Dorsolateral prefrontal cortex (tissue), 120 donors: ENCODE measurements at regions of chr19 and their contacts with region 1.

Region 1: DNA sequence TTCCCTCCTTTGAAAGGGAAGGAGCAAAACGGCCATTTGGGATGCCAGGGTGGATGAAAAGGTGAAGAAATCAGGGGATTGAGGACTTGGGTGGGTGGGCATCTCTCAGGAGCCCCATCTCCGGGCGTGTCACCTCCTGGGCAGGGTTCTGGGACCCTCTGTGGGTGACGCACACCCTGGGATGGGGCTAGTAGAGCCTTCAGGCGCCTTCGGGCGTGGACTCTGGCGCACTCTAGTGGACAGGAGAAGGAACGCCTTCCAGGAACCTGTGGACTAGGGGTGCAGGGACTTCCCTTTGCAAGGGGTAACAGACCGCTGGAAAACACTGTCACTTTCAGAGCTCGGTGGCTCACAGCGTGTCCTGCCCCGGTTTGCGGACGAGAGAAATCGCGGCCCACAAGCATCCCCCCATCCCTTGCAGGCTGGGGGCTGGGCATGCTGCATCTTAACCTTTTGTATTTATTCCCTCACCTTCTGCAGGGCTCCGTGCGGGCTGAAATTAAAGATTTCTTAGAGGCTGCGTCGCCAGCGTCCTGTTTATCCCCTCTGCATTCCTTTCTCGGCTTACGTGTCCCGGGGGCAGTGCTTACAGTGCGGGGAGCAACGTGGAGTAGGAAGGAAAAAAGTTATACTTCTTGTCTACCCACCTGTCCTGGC is 15.2 kb upstream of the S1PR4 start:
- DNase-seq: peak in 9 of 10 donors; percentile 41 to 82 (median 62)
- H3K4me3 ChIP-seq: peak overlapping the region in 1 of 59 donors; percentile 23
- H3K27ac ChIP-seq: no peak overlapping the region
- H3K27me3 ChIP-seq: no peaks in the 10 kb centered on the region
- CTCF ChIP-seq: peak; percentile 50 to 96 (median 92)

Region 2: DNA sequence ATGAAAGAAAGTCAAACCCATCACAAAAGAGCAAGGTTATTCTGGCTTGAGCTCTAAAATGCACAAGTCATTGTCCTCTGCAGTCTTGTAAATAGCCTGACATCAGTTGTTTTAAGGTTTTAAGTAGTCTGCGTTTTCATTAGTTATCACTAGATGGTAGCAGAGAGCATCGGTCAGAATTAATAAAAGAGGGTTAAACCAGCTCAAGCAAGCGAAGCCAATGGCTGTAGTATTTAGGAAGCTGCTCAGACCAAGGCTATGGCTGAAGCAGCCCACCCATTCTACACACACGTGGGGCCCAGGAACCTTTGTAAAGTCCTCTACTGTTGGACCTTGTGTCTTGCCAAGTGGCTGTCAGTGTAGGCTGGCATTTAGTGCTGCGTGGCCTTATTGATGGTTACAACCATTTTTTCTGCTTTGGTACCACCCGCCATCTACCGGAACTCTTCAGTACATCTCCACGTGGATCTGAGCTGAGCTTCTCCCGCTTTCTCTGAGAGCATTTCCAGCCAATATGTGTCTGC is 275.9 kb before region 1 on chr19:
- intact Hi-C with region 1: loop called (anchors 10 kb)
- DNase-seq: peak in 2 of 10 donors; percentile 25 to 40
- H3K4me3 ChIP-seq: peak overlapping the region in 36 of 59 donors; percentile 4 to 48 (median 32)
- H3K27ac ChIP-seq: peak overlapping the region in 40 of 59 donors; percentile 1 to 87 (median 48)
- H3K27me3 ChIP-seq: no peaks in the 10 kb centered on the region
- CTCF ChIP-seq: peak; percentile 41 to 84 (median 74)

Region 3: GRCh38 chr19:2952953-2953491 is 210.3 kb before region 1 on chr19:
- intact Hi-C with region 1: loop called in 1 of 2 experiments (anchors 2 kb)
- DNase-seq: no peak
- H3K4me3 ChIP-seq: no peak overlapping the region
- H3K27ac ChIP-seq: no peak overlapping the region
- H3K27me3 ChIP-seq: no peaks in the 10 kb centered on the region
- CTCF ChIP-seq: peak in 1 of 56 donors; percentile 5

Region 4: GRCh38 chr19:2962045-2962561 is 201.3 kb before region 1 on chr19:
- intact Hi-C with region 1: loop called in 1 of 2 experiments (anchors 1 kb)
- DNase-seq: peak in 2 of 10 donors; percentile 29 to 56
- H3K4me3 ChIP-seq: peak overlapping the region in 20 of 59 donors; percentile 0 to 52 (median 23)
- H3K27ac ChIP-seq: no peak overlapping the region
- H3K27me3 ChIP-seq: no peaks in the 10 kb centered on the region
- CTCF ChIP-seq: peak; percentile 61 to 89 (median 79)

Region 5: GRCh38 chr19:3075895-3076431 is 87.4 kb before region 1 on chr19:
- intact Hi-C with region 1: loop called in 1 of 2 experiments (anchors 10 kb)
- DNase-seq: peak in 6 of 10 donors; percentile 26 to 81 (median 52)
- H3K4me3 ChIP-seq: peak overlapping the region in 46 of 59 donors; percentile 0 to 50 (median 32)
- H3K27ac ChIP-seq: peak overlapping the region in 2 of 59 donors; percentile 4 to 39
- H3K27me3 ChIP-seq: no peaks in the 10 kb centered on the region
- CTCF ChIP-seq: peak; percentile 65 to 97 (median 90)

Region 6: GRCh38 chr19:3142292-3142670 is 21.1 kb before region 1 on chr19:
- intact Hi-C with region 1: no loop called
- DNase-seq: no peak
- H3K4me3 ChIP-seq: no peak overlapping the region
- H3K27ac ChIP-seq: peak overlapping the region in 16 of 59 donors; percentile 4 to 74 (median 36)
- H3K27me3 ChIP-seq: no peaks in the 10 kb centered on the region
- CTCF ChIP-seq: no peak